ENCODE measurements at regions of chr3 and their contacts with region 1.

Region 1: GRCh38 chr3:182524740-182525407 is 268.4 kb upstream of the ATP11B start:
- DNase-seq: no peak
- ATAC-seq: no peak
- H3K4me3 ChIP-seq: no peak overlapping the region
- H3K27ac ChIP-seq: no peak overlapping the region
- H3K4me1 ChIP-seq: no peaks in the 10 kb centered on the region
- H3K27me3 ChIP-seq: no peaks in the 10 kb centered on the region; the same call in 1 of the 2 replicates
- CTCF ChIP-seq: no peak

Region 2: GRCh38 chr3:182490596-182491491 is 34.0 kb before region 1 on chr3:
- CTCF ChIA-PET with region 1: no interaction called
- POLR2A ChIA-PET with region 1: interaction called, 10 read pairs
- in situ Hi-C with region 1: no loop called
- intact Hi-C with region 1: no loop called
- DNase-seq: peak; percentile 7
- ATAC-seq: no peak; the same call in 1 of the 2 replicates
- H3K4me3 ChIP-seq: no peak overlapping the region
- H3K27ac ChIP-seq: no peak overlapping the region
- H3K4me1 ChIP-seq: no peaks in the 10 kb centered on the region
- H3K27me3 ChIP-seq: no peaks in the 10 kb centered on the region
- CTCF ChIP-seq: peak; percentile 70

Region 3: GRCh38 chr3:182585532-182586150 is 60.8 kb after region 1 on chr3:
- CTCF ChIA-PET with region 1: interaction called, 12 read pairs
- POLR2A ChIA-PET with region 1: no interaction called
- in situ Hi-C with region 1: no loop called
- intact Hi-C with region 1: no loop called
- DNase-seq: no peak
- ATAC-seq: no peak
- H3K4me3 ChIP-seq: no peak overlapping the region
- H3K27ac ChIP-seq: no peak overlapping the region
- H3K4me1 ChIP-seq: no peaks in the 10 kb centered on the region
- H3K27me3 ChIP-seq: no peaks in the 10 kb centered on the region
- CTCF ChIP-seq: no peak

Measured in Panc1 (cell line).